Esophagus muscularis mucosa (tissue), 4 donors: ENCODE measurements at regions of chr2 and their contacts with region 1.

Region 1: DNA sequence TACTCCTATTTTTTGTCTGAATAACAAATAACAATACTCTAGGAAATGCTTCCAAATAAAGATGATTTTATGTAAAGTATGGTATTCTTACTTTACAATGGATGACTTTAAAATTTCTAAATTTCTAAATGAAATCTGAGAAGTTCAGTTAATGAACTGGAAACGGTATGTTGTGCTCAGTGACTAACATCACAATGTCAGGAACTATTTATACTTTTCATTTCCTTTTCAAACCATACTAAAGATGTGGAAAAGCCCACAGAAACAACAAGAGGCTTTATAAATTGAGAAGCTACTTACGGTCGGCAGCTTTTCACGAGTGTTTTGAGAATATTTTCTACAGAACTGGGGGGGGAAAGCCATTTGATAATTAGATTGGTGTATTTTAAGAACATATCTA is 31.1 kb downstream of the PSME4 start:
- DNase-seq: no peak
- H3K4me3 ChIP-seq: no peak overlapping the region
- H3K27ac ChIP-seq: no peak overlapping the region
- H3K4me1 ChIP-seq: peaks cover 0 to 7% (median 5%) of the 10 kb centered on the region in 4 donors
- H3K27me3 ChIP-seq: no peaks in the 10 kb centered on the region
- CTCF ChIP-seq: no peak
- EP300 ChIP-seq: no peak
- POLR2A ChIP-seq: no peak

Region 2: DNA sequence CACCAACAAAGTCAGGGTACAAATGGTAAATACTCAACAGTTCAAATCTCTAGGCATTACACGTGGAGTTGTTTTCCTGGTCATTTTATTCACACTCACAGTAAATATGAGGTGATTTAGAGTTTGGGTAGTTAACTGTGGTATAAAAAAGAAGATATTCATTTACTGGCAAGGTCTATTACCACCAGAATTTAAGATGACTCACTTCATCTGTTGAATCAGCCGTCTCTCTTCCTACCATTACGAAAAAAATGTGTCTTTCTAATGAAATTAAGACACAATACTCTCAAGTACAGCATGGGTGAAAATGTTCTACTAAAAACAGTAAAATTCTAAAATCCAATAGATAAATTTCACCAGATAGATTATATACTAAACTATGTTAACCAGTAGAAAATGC is 58.9 kb before region 1 on chr2:
- intact Hi-C with region 1: loop called (anchors 10 kb)
- DNase-seq: no peak
- H3K4me3 ChIP-seq: no peak overlapping the region
- H3K27ac ChIP-seq: no peak overlapping the region
- H3K4me1 ChIP-seq: no peaks in the 10 kb centered on the region
- H3K27me3 ChIP-seq: no peaks in the 10 kb centered on the region
- CTCF ChIP-seq: no peak
- EP300 ChIP-seq: no peak
- POLR2A ChIP-seq: no peak